ENCODE measurements at regions of chr2 and their contacts with region 1.

Region 1: GRCh38 chr2:45070113-45070652 is 60.9 kb upstream of the SIX2 start:
- DNase-seq: no peak

Region 2: DNA sequence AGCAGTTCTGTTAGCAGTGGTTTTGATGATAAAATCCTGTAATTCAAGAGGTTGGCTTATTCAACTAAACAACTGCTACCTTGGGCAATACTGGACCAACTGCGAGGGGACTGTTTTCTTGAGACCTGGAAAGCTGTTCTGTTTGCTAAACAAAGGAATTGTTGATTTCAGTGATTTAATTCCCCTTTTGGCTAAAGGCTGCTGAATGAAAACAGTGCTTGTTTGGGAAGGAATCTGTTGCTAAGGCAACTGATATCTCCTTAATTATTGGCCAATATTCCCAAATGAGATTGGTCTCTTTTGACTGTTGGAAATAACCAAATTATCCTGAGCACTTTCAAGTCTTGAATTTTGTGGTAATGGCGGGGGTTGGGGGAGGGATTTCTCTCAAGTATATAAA is 571.6 kb before region 1 on chr2:
- intact Hi-C with region 1: loop called in 1 of 2 experiments (anchors 10 kb)
- DNase-seq: no peak

Region 3: DNA sequence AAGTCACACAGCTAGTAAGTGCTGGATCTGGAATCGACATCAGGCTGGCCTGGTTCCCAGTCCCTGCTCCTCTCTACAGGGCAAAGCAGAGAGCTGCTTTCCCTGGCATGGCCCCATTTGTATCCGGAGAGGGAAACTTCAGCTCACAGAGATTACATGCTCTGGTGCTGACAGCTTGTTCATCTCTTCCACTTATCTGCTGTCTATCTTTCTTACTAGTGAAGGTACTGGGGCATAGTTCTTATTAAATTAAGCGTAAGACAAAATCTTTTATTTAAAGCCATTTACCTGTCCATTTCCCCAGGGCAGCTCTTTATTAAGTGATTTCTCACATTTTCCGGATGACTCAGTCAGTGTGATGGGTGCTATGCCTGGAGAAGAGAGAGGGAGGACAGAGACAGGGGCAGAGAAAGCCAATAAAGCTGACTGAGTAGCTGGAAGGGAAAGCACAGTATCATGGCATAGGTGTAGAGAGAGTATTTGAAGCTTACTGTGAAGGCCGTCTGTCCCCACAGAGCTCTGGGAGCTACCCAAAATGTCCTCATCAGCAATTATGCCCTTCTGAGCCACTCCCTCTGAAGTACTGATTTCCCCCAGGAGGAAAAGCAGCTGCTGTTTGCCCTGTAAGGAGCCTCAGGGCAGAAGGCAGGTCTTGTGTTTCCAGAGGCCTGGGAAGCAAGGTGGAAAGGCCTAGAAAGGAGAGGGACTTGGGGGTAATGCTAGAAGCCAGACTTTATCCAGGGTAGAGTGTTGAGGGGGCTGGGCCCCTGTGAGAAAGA is 1182.9 kb after region 1 on chr2:
- intact Hi-C with region 1: no loop called
- DNase-seq: no peak

Region 4: GRCh38 chr2:46335391-46336282 is 1265.5 kb after region 1 on chr2:
- intact Hi-C with region 1: no loop called
- DNase-seq: no peak

Measured in posterior vena cava (tissue), 2 donors.